PC-9 (cell line): ENCODE measurements at regions of chrX and their contacts with region 1.

Region 1: GRCh38 chrX:154428176-154429010 is at the start of gene ATP6AP1:
- DNase-seq: peak; percentile 83 to 97
- H3K4me3 ChIP-seq: peak within 1 kb of the TSS; percentile 67
- H3K27ac ChIP-seq: no peak within 1 kb of the TSS
- H3K4me1 ChIP-seq: peaks cover 6% of the 10 kb centered on the region
- H3K27me3 ChIP-seq: no peaks in the 10 kb centered on the region
- CTCF ChIP-seq: no peak
- total RNA-seq, gene ATP6AP1: 112 and 119 TPM in 2 replicates

Region 2: DNA sequence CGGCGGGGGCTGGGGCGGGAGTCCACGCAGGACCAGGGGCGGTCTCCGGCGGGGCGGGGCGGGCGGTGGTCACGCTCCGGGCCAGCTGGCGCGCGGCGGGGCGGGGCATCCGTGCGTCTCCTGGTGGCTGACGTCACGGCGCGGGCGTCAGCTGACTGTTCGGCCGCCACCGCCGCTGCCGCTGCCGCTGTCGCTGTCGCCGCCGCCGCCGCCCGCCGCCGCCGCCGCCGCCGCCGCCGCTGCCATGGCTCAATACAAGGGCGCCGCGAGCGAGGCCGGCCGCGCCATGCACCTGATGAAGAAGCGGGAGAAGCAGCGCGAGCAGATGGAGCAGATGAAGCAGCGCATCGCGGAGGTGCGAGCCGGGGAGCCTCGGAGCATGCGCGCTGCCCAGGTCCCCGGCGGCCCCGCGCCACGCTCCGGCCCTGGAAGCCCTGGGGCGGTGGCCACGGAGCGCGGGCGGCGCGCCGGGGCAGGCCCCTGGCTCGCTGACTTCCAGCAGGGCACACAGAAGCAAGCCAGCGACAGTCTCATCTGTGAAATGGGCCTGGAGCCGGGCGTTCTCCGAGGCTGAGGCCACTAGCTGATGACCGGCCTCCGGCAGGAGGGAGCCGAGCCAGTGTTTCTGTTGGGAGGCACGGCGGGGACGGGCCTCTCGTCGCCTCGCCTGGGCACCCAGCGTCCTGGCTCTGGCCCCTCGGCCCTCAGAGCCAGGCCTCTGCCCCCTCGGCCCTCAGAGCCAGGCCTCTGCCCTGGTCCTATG is 15.8 kb after region 1 on chrX and contains the start of gene FAM50A:
- CTCF ChIA-PET with region 1: interaction called, 10 read pairs
- POLR2A ChIA-PET with region 1: no interaction called
- intact Hi-C with region 1: no loop called
- DNase-seq: peak in 1 of 2 experiments; percentile 77
- H3K4me3 ChIP-seq: peak within 1 kb of the TSS; percentile 72
- H3K27ac ChIP-seq: no peak within 1 kb of the TSS
- H3K4me1 ChIP-seq: no peaks in the 10 kb centered on the region
- H3K27me3 ChIP-seq: no peaks in the 10 kb centered on the region
- CTCF ChIP-seq: no peak
- total RNA-seq, gene FAM50A: 82.1 and 89.4 TPM in 2 replicates

Region 3: DNA sequence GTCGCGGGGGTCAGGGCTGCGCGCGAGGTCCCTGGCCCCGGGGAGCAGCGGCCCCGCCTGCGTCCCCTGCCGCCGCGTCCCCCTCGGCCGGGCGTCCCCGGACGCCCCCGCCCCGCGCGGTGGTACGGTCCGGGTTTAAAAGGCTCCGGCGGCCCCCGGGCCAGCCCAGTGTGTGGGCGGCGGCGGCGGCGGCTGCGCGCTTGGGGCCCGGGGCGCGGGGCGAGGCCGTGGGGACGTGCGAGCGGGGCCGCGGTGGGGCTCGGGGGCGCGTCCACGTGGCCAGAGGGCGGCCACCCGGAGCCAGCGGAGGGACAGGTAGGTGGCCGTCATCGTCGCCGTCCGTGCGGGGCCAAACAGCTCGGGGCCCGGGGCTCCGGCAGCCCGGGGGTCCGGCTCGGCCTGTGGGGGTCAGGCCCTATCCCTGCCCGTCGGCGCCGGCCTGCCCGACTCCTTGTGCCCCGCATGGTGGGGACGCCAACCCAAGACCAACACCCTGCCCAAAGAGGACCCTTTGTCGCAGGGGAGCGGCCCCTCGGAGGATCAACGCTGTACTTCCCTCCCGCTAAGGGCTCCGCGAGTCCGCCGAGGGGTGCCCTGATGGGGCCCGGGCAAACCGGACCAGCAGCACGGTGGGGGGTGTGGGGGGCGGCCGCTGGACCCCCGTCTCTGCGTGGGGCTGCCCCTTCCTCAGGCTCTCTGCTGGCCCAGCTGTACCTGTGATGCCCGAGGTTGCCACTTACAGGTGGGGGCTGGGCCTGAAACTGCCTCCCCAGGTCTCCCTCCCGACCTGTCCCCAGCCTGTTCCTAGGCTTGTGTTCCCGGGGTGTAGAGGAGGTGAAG is 29.9 kb after region 1 on chrX and contains the start of gene PLXNA3:
- CTCF ChIA-PET with region 1: no interaction called
- POLR2A ChIA-PET with region 1: no interaction called
- intact Hi-C with region 1: no loop called
- DNase-seq: peak in 1 of 2 experiments; percentile 76
- H3K4me3 ChIP-seq: peak within 1 kb of the TSS; percentile 66
- H3K27ac ChIP-seq: no peak within 1 kb of the TSS
- H3K4me1 ChIP-seq: peaks cover 5% of the 10 kb centered on the region
- H3K27me3 ChIP-seq: no peaks in the 10 kb centered on the region
- CTCF ChIP-seq: no peak
- total RNA-seq, gene PLXNA3: 109 and 124 TPM in 2 replicates